ENCODE measurements at regions of chr16 and their contacts with region 1.

Region 1: DNA sequence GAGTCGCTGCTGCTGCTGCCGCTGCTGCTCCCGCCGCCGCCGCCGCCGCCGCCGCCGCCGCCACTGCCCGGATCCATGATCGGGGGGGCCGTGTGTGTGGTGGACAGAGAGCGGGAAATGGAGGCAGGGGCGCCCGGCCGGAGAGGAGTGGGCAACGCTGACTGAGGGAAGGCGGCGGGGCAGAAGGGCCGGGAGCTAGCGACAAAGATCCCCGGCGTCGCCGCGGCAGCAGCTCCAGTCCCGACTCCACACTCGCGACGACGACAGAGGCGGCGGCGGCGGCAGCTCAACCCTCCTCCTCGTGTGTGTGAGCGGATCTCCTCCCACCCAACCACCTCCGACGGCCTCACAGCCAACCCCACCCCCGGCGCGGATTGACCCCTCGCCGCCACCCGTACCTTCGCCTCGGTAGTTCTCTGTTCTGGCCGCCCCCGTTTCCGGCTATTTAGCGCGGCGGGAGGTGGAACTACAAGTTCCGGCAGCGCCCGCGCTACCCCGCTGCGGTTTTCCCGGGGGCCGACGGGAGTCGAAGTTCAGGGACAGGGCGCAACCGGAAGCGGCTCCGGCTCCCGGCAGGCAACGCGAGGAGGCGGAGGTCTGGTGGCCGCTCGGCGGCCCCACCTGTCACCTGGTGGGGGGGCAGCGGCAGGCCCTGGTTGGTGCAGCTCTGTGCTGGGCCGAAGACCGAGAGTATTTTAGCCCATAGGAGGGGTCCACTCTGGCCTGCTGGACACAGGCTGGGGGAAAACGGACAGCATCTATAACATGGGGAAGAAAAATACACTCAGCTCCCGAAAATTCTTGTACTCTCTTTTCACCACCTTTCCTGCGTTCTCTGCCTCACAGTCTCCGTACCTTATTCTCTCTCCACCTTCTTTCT is at the start of gene GSPT1:
- DNase-seq: peak; percentile 99
- ATAC-seq: peak; percentile 94 to 97
- H3K4me3 ChIP-seq: peak within 1 kb of the TSS; percentile 81 to 89 (median 84)
- H3K27ac ChIP-seq: peak within 1 kb of the TSS; percentile 92 to 99 (median 96)
- H3K4me1 ChIP-seq: peaks cover 29 to 34% of the 10 kb centered on the region in 2 donors
- H3K27me3 ChIP-seq: no peaks in the 10 kb centered on the region
- CTCF ChIP-seq: peak in 4 of 5 experiments; percentile 17 to 58 (median 24)
- POLR2A ChIP-seq: peak; percentile 93 to 96
- total RNA-seq, gene GSPT1: 86.9 to 169 (median 139) TPM

Region 2: DNA sequence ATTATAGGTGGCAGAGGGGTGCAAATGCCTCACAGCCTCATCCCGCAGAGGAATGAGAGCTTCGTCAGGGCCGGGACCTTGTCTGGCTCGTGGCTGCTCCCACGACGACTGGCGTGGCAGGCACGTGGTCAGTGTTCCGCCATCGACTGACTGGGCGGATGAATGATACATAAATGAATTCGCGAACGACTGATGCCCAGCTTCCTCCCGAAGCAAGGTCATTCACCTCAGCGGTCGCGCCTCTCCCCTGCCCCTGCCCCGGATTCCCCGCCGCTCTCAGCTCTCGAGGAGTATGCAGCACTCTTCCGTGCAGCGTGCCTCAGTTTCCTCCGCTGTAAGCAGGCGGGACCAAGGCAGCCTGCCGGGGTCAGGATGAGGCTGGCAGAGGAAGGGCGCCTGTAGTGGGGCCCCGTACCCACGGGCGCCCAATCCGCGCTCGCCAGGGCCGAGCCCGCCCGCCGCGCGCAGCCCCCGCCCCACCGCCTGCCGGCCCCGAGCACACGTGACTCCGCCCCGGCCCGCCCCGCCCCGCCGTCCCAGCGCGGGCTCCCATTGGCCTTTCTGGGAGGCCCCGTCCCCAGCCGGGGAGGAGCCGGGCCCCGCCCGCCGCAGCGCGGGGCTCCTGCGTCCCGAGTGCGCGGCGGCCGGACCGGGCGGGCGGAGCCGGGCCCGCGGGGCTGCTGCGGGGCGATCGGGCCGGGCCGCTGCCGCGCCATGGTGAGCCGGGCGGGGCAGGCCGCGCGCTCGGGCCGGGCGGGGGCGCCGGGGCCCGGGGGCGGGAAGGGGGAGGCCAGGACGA is 247.9 kb before region 1 on chr16 and contains the start of gene SNN:
- in situ Hi-C with region 1: no loop called
- intact Hi-C with region 1: loop called (anchors 10 kb)
- DNase-seq: peak; percentile 78 to 88
- ATAC-seq: peak; percentile 57 to 60
- H3K4me3 ChIP-seq: peak within 1 kb of the TSS; percentile 79 to 99 (median 88)
- H3K27ac ChIP-seq: peak within 1 kb of the TSS; percentile 91 to 99 (median 97)
- H3K4me1 ChIP-seq: peaks cover 36 to 41% of the 10 kb centered on the region in 2 donors
- H3K27me3 ChIP-seq: no peaks in the 10 kb centered on the region
- CTCF ChIP-seq: no peak
- POLR2A ChIP-seq: peak; percentile 67 to 73
- total RNA-seq, gene SNN: 22.5 to 94.5 (median 78.1) TPM

Region 3: DNA sequence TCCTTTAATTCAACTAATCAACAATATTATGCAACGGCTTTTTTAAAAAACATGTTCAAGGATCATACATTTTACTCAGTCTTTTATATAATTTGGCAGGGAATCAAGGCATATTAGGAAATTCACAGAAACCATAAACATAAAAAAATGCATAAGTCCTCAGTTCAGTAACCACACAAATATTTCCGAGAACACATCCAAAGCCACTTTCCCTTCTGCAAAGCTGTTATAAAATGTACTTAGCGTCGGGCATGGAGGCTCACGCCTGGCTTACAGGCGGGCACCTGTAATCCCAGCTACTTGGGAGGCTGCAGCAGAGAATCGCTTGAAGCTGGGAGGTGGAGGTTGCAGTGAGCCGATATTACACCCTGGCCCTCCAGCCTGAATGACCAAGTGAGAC is 109.2 kb before region 1 on chr16:
- in situ Hi-C with region 1: no loop called
- intact Hi-C with region 1: no loop called
- DNase-seq: no peak
- ATAC-seq: no peak
- H3K4me3 ChIP-seq: no peak overlapping the region
- H3K27ac ChIP-seq: no peak overlapping the region
- H3K4me1 ChIP-seq: no peaks in the 10 kb centered on the region
- H3K27me3 ChIP-seq: no peaks in the 10 kb centered on the region
- CTCF ChIP-seq: no peak
- POLR2A ChIP-seq: no peak

Region 4: DNA sequence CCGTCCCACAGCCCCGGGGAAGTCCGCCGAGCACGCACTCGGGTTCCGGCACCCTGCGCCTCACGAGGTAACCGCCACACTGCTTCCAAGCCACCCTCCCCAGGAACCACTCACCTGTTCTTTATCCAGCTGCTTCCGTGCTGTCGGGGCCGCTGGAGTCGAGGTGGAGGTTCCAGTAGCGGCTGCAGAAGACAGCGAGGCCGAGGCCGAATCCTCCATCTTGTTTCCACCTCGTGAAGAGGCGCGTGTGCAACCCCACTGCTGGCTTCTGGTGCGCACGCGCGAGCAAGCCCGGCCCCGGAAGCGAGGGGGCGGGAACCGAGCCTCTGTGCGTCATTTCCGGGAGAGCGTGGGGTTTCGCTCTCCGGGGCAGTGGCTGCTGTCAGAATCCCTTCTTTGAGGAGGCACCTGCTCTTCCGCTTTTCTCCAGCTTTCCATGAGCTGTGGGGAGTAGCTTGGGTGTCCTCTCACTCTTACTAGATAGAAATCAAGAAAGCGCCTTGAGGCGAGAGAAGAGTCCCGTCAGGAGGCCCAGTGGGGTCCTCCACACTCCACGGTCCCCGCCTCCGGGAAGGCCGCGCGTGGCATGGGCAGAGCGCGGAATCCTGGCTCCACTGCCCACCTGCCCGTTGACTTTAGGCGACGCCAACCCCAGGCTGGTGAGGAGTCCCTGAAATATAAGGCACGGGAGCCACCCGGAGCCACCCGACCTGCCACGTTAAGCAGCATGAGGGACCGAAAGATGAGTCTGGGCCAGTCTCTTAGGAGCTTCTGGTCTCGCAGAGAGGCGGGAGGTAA is 64.4 kb before region 1 on chr16 and contains the start of gene RSL1D1:
- in situ Hi-C with region 1: no loop called
- intact Hi-C with region 1: loop called (anchors 1 kb)
- DNase-seq: peak; percentile 85 to 91
- ATAC-seq: peak; percentile 96
- H3K4me3 ChIP-seq: peak within 1 kb of the TSS; percentile 87 to 98 (median 92)
- H3K27ac ChIP-seq: peak within 1 kb of the TSS; percentile 95 to 98 (median 96)
- H3K4me1 ChIP-seq: peaks cover 35 to 39% of the 10 kb centered on the region in 2 donors
- H3K27me3 ChIP-seq: no peaks in the 10 kb centered on the region
- CTCF ChIP-seq: peak in 2 of 5 experiments; percentile 7 to 30
- POLR2A ChIP-seq: peak; percentile 98 to 99
- total RNA-seq, gene RSL1D1: 215 to 302 (median 259) TPM

Region 5: GRCh38 chr16:11977376-11978041 is 61.6 kb after region 1 on chr16:
- in situ Hi-C with region 1: no loop called
- intact Hi-C with region 1: loop called (anchors 1 kb)
- DNase-seq: peak in 1 of 2 donors; percentile 43
- ATAC-seq: peak; percentile 54 to 59
- H3K4me3 ChIP-seq: peak overlapping the region; percentile 85 to 91 (median 88)
- H3K27ac ChIP-seq: peak overlapping the region; percentile 85 to 91 (median 89)
- H3K4me1 ChIP-seq: peaks cover 17 to 24% of the 10 kb centered on the region in 2 donors
- H3K27me3 ChIP-seq: no peaks in the 10 kb centered on the region
- CTCF ChIP-seq: no peak
- POLR2A ChIP-seq: peak; percentile 44 to 53

Measured in gastrocnemius medialis (tissue), 4 donors.